Mammary epithelial cell (primary cell): ENCODE measurements at regions of chr6 and their contacts with region 1.

Region 1: GRCh38 chr6:80331974-80332373 is 225.5 kb downstream of the BCKDHB start:
- DNase-seq: no peak
- H3K4me3 ChIP-seq: no peak overlapping the region
- H3K27ac ChIP-seq: no peak overlapping the region
- H3K4me1 ChIP-seq: no peaks in the 10 kb centered on the region
- H3K27me3 ChIP-seq: no peaks in the 10 kb centered on the region
- CTCF ChIP-seq: no peak

Region 2: GRCh38 chr6:80133020-80133419 is 199.0 kb before region 1 on chr6:
- CTCF ChIA-PET with region 1: no interaction called
- dilution Hi-C with region 1: no loop called
- in situ Hi-C with region 1: no loop called
- intact Hi-C with region 1: loop called (anchors 2 kb)
- DNase-seq: peak; percentile 41
- H3K4me3 ChIP-seq: no peak overlapping the region
- H3K27ac ChIP-seq: no peak overlapping the region
- H3K4me1 ChIP-seq: peaks cover 9% of the 10 kb centered on the region
- H3K27me3 ChIP-seq: no peaks in the 10 kb centered on the region
- CTCF ChIP-seq: peak; percentile 64

Region 3: GRCh38 chr6:80502871-80503270 is 170.9 kb after region 1 on chr6:
- CTCF ChIA-PET with region 1: no interaction called
- dilution Hi-C with region 1: no loop called
- in situ Hi-C with region 1: no loop called
- intact Hi-C with region 1: no loop called
- DNase-seq: no peak
- H3K4me3 ChIP-seq: no peak overlapping the region
- H3K27ac ChIP-seq: no peak overlapping the region
- H3K4me1 ChIP-seq: no peaks in the 10 kb centered on the region
- H3K27me3 ChIP-seq: no peaks in the 10 kb centered on the region
- CTCF ChIP-seq: no peak

Region 4: DNA sequence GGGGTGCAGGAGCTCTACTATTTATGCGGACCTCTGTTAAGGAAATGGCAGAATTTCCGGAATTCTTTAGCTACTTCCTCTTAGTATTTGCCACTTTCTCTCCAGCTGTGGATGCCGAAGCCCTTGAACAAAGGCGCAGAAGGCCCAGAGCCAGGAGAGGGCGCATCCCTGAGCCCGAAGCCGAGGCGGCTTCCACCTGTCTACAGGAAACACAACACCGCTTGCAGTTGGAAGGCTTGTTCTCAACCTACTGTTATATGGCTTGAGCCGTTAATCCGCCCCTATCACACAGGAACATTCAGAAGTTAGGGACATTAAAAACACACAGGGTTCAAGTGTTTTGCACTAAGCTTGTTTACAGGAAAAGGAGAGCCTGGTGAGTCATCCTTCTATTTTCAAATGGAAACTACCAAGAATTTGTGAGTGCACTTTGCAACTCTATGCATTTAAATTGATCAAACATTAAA is 191.6 kb after region 1 on chr6:
- CTCF ChIA-PET with region 1: no interaction called
- dilution Hi-C with region 1: no loop called
- in situ Hi-C with region 1: no loop called
- intact Hi-C with region 1: no loop called
- DNase-seq: no peak
- H3K4me3 ChIP-seq: no peak overlapping the region
- H3K27ac ChIP-seq: no peak overlapping the region
- H3K4me1 ChIP-seq: peaks cover 4% of the 10 kb centered on the region
- H3K27me3 ChIP-seq: no peaks in the 10 kb centered on the region
- CTCF ChIP-seq: no peak